Dendritic cell treated with granulocyte-macrophage colony-stimulating factor and Interleukin-4, amounts not matched to agents 40 ng/mL and 50 ng/mL, for 4 days (primary cell): ENCODE measurements at regions of chr12 and their contacts with region 1.

Region 1: DNA sequence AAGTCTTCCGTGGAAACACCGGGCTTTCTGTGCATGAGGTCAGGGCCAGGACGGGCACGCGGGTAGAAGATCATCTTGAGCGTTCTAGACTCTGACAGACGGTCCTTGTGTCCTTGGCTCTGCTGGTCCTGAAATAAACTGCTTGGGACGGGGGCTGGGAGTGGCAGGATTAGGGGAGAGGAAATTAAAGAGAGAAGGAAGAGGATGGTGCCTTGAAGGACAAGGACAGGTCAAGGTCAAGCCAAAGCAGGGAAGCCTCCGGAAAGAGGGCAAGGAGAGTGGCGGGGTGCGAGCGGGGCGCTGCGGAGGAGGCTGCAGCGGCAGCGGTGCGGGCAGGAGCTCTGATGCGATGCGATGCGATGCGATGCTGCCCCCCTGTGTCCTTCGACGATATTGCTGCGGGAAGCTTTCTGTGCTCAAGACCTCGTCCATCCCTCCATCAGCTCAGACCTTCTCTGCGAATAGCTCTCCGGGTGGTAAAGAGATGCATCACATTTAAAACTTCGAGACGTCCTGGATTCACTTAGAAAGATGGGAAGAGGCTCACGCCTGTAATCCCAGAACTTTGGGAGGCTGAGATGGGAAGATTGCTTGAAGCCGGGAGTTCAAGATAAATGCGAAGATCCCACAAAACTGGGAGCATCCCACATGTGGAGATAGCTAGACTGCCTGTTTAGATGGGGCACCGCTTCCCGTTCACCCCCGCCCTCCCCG is 110.1 kb upstream of the TMEM132D start:
- H3K4me3 Mint-ChIP-seq: no peak overlapping the region
- H3K27ac Mint-ChIP-seq: no peak overlapping the region
- H3K4me1 Mint-ChIP-seq: no peaks in the 10 kb centered on the region
- H3K27me3 Mint-ChIP-seq: peaks cover 2% of the 10 kb centered on the region

Region 2: GRCh38 chr12:128259556-128260070 is 1754.3 kb before region 1 on chr12:
- intact Hi-C with region 1: loop called (anchors 5 kb)
- H3K4me3 Mint-ChIP-seq: no peak overlapping the region
- H3K27ac Mint-ChIP-seq: no peak overlapping the region
- H3K4me1 Mint-ChIP-seq: no peaks in the 10 kb centered on the region
- H3K27me3 Mint-ChIP-seq: peaks cover 7% of the 10 kb centered on the region

Region 3: DNA sequence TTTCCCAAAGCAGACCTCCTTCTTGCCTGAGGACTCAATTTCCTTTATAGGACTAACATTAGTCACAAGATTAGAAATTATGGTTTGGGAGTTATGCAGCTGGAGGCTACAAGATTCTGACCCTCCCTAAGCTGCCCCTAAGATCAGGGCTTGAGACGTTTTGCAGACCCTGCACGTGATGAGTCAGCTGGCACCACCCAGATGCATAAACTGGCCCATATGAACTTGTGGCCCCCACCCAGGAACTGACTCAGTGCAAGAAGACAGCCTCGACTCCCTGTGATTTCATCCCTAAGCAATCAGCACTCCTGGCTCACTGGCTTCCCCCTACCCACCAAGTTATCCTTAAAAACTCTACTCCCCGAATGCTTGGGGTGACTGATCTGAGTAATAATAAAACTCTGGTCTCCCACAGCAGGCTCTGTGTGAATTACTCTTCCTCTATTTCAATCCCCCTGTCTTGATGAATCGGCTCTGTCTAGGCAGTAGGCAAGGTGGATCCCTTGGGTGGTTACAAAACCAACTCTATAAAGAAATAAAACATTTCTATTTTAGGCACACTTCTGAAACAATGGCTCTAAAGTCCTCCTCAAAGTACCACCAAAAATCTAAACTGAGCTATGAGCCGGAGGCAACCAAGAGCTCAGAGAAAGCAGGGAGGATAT is 343.5 kb before region 1 on chr12:
- intact Hi-C with region 1: no loop called
- H3K4me3 Mint-ChIP-seq: no peak overlapping the region
- H3K27ac Mint-ChIP-seq: no peak overlapping the region
- H3K4me1 Mint-ChIP-seq: no peaks in the 10 kb centered on the region
- H3K27me3 Mint-ChIP-seq: no peaks in the 10 kb centered on the region

Region 4: DNA sequence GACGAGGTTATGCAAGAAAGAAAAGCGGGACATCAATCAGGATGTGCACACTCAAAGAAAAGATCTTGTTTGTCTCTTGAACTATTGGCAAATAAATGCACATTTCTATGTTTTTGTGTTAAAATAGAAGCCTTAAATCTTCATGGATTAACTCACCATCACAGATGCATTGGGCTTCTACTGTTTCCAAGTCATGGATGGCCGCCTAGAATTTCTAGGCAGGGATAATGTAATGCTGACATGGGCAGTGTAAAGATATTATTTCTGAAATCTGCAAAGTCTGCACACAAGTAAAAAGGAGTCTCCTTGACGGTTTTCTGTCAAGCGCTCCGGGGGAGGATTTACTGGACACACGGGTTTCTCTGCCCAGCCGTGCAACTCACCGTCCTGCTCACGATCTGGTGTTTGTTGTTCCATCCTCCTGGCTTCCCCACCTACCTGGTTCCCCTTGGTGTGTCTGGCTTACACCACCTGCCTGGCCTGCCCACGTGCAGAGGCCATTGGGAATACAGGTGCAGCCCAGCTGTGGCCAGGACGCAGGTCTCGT is 45.1 kb after region 1 on chr12:
- intact Hi-C with region 1: no loop called
- H3K4me3 Mint-ChIP-seq: no peak overlapping the region
- H3K27ac Mint-ChIP-seq: no peak overlapping the region
- H3K4me1 Mint-ChIP-seq: no peaks in the 10 kb centered on the region
- H3K27me3 Mint-ChIP-seq: no peaks in the 10 kb centered on the region